A549 (cell line): ENCODE measurements at regions of chr11 and their contacts with region 1.

Region 1: DNA sequence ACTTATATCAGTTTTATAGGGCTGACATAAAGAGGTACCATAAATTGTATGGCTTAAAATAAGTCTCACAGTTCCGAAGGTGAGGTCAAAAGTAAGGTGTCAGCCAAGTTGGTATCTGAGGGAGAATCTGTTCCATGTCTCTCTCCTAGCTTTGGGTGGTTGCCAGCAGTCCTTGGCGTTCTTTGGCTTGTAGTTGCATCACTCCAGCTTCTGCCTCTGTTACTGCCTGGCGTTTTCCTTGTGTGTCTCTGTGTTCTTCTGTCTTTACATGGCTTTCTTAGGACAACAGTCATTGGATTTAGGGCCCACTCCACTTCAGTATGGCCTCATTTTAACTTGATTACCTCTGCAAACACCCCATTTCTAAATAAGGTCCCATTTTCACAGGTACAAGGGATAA is 16.7 kb downstream of the MMP7 start:
- DNase-seq: no peak
- ATAC-seq: no peak
- H3K4me3 ChIP-seq: no peak overlapping the region
- H3K27ac ChIP-seq: peak overlapping the region; percentile 44 to 69; a peak in 4 of 6 replicates
- H3K4me1 ChIP-seq: peaks cover 11% of the 10 kb centered on the region; the same call in 2 of the 3 replicates
- CTCF ChIP-seq: no peak
- EP300 ChIP-seq: no peak
- POLR2A ChIP-seq: no peak
- RAD21 ChIP-seq: no peak

Region 2: GRCh38 chr11:101407324-101407723 is 1106.5 kb before region 1 on chr11:
- CTCF ChIA-PET with region 1: no interaction called
- POLR2A ChIA-PET with region 1: no interaction called
- DNase-seq: no peak
- ATAC-seq: no peak
- H3K4me3 ChIP-seq: no peak overlapping the region
- H3K27ac ChIP-seq: no peak overlapping the region
- H3K4me1 ChIP-seq: no peaks in the 10 kb centered on the region
- CTCF ChIP-seq: no peak
- EP300 ChIP-seq: no peak
- POLR2A ChIP-seq: no peak
- RAD21 ChIP-seq: no peak

Region 3: GRCh38 chr11:102476812-102477211 is 37.1 kb before region 1 on chr11:
- CTCF ChIA-PET with region 1: no interaction called
- POLR2A ChIA-PET with region 1: no interaction called
- DNase-seq: no peak
- ATAC-seq: peak; percentile 62 to 79; a peak in 4 of 6 replicates
- H3K4me3 ChIP-seq: no peak overlapping the region
- H3K27ac ChIP-seq: peak overlapping the region; percentile 47 to 66; a peak in 4 of 6 replicates
- H3K4me1 ChIP-seq: peaks cover 13% of the 10 kb centered on the region; the same call in 2 of the 3 replicates
- CTCF ChIP-seq: no peak
- EP300 ChIP-seq: no peak
- POLR2A ChIP-seq: no peak
- RAD21 ChIP-seq: no peak

Region 4: GRCh38 chr11:102495161-102496042 is 18.5 kb before region 1 on chr11:
- CTCF ChIA-PET with region 1: interaction called, 10 read pairs
- POLR2A ChIA-PET with region 1: no interaction called
- DNase-seq: peak; percentile 41 to 86
- ATAC-seq: peak; percentile 81 to 85
- H3K4me3 ChIP-seq: no peak overlapping the region
- H3K27ac ChIP-seq: peak overlapping the region; percentile 71 to 80
- H3K4me1 ChIP-seq: peaks cover 36% of the 10 kb centered on the region
- CTCF ChIP-seq: peak; percentile 69
- EP300 ChIP-seq: no peak
- POLR2A ChIP-seq: no peak
- RAD21 ChIP-seq: peak; percentile 83 to 91